Activated naive CD8-positive, alpha-beta T cell treated with anti-CD3 and anti-CD28 coated beads, Interleukin-2, amount 10 ng/mL, durations not matched to agents 7 days and 5 days (primary cell): ENCODE measurements at regions of chr1 and their contacts with region 1.

Region 1: GRCh38 chr1:43974443-43975248 is at the start of gene ATP6V0B:
- DNase-seq: peak; percentile 94
- ATAC-seq: peak; percentile 76
- H3K4me3 Mint-ChIP-seq: peak within 1 kb of the TSS; percentile 86
- H3K27ac Mint-ChIP-seq: peak within 1 kb of the TSS; percentile 88
- H3K4me1 Mint-ChIP-seq: peaks cover 44% of the 10 kb centered on the region
- H3K27me3 Mint-ChIP-seq: no peaks in the 10 kb centered on the region
- total RNA-seq, gene ATP6V0B: 90.4 to 94.2 TPM

Region 2: DNA sequence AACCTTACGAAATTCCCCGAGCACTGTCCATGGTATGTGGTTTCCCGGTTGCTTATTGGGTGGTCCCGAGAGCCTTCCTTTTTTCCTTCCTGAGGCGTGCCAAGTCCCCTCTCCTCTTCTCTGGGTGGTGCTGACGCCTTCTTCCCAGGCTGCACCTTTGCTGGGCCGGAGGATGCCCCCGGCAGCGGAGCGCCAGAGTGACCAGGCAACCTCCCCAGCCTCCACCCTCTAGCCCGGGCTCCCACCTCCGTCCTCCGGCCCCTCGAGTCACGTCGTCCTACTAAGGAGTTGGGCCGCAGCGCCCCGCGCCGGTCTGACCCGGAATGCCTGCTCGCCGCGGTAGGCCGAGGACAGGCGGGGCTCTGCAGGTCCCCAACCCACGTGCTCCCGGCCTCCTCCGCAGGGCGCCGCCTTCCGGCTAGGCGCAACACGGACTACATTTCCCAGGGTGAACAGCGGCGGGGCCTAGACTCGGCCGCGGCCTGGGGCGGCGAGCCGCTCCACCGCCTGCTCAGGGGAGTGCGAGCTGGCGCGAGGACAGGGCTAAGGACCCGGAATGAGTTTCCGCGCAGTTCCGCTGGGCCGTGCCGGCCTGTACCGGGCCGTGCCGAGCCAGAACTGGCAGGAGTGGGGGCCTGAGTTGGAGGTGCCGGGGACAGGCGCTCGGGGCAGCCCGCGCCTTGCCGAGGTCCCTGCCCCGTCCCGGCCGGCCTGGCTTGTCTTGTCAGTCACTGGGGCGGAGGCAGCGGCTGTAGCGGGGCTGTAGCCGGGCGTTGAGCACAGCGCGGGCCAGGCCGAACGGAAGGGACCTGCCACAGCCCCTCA is 28.2 kb before region 1 on chr1 and contains the start of gene IPO13:
- POLR2A ChIA-PET with region 1: interaction called, 23 read pairs
- DNase-seq: peak; percentile 98
- ATAC-seq: peak; percentile 94
- H3K4me3 Mint-ChIP-seq: peak within 1 kb of the TSS; percentile 93
- H3K27ac Mint-ChIP-seq: peak within 1 kb of the TSS; percentile 90
- H3K4me1 Mint-ChIP-seq: peaks cover 29% of the 10 kb centered on the region
- H3K27me3 Mint-ChIP-seq: no peaks in the 10 kb centered on the region
- total RNA-seq, gene IPO13: 24.1 to 24.4 TPM

Region 3: GRCh38 chr1:43991476-43992231 is 17.0 kb after region 1 on chr1 and contains the start of gene CCDC24:
- POLR2A ChIA-PET with region 1: interaction called, 13 read pairs
- DNase-seq: peak; percentile 82
- ATAC-seq: peak; percentile 76
- H3K4me3 Mint-ChIP-seq: peak within 1 kb of the TSS; percentile 91
- H3K27ac Mint-ChIP-seq: peak within 1 kb of the TSS; percentile 63
- H3K4me1 Mint-ChIP-seq: peaks cover 13% of the 10 kb centered on the region
- H3K27me3 Mint-ChIP-seq: no peaks in the 10 kb centered on the region
- total RNA-seq, gene CCDC24: 1.3 to 3.2 TPM

Region 4: DNA sequence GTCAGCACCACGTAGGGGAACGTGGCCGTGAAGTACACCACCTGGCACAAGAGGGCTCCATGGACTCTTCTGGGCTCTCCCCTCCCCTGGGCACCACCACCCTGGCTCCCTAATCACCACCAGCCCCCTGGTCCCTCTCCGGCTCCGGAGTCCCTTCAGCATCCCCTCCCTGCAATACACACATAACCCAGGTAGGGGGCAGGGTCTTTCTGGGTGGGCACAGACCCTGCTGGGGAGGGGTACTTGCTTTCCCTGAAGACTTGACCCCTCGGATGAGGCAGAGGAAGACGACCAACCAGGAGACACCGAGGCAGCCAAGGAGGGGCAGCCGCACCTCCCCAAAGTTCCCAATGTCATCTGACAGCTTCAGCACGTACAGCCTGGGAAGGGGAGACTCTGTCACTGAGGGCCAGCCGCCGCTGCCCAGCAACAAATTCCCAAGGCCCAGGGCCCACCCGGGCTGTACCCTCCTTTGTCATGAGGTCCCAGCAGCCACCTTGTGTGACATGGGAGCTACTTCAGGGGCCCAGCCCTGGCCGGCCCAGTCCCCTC is 28.0 kb after region 1 on chr1:
- POLR2A ChIA-PET with region 1: no interaction called
- DNase-seq: no peak
- ATAC-seq: no peak
- H3K4me3 Mint-ChIP-seq: no peak overlapping the region
- H3K27ac Mint-ChIP-seq: no peak overlapping the region
- H3K4me1 Mint-ChIP-seq: peaks cover 3% of the 10 kb centered on the region
- H3K27me3 Mint-ChIP-seq: no peaks in the 10 kb centered on the region